Lower leg skin (tissue), 4 donors: ENCODE measurements at regions of chr9 and their contacts with region 1.

Region 1: DNA sequence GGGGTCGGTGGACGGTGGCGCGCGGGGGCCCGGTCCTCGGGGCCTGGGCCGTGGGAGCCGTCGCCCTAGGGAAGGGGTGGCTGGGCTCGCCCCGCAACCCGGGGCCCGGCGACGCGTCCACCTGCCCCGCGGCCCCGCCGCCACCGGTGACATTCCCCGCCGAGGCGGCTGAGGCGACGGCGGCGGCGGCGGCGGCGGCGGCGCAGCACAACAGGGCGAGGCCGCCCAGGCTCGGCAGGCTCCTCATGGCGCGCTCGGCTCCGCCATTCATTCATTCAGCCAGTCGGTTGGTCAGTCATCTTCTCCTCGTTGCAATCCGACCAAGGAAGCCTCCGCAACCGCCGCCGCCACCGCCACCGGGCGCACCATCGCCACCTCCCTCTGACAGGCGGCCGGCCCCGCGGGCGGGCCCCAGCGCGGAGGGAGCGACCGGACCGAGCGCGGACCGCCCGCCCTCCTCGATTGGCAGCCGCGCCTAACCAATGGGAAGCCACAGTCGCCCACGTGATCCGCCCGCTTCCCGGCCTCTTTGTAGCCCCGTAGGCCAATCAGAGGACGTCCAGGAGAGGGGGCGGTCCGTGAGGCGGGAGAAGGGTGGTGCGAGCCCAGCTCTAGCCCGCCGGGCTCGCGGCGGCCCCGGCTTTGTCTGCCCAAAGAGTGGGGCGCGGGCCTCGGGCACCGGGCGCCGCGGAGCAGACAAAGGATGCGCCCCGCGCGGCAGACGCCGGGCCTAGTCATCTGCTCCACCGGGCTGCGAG is at the start of gene MEGF9:
- DNase-seq: peak; percentile 98 to 100
- H3K4me3 ChIP-seq: peak within 1 kb of the TSS; percentile 78
- CTCF ChIP-seq: no peak
- POLR2A ChIP-seq: peak in 1 of 2 donors; percentile 38
- total RNA-seq, gene MEGF9: 49.0 to 59.0 (median 57.0) TPM

Region 2: GRCh38 chr9:120619751-120620655 is 94.3 kb before region 1 on chr9:
- intact Hi-C with region 1: loop called (anchors 10 kb)
- DNase-seq: peak in 1 of 2 donors; percentile 56
- H3K4me3 ChIP-seq: no peak overlapping the region
- CTCF ChIP-seq: peak in 1 of 3 donors; percentile 33
- POLR2A ChIP-seq: no peak